Endothelial cell of umbilical vein (primary cell): ENCODE measurements at regions of chr21 and their contacts with region 1.

Region 1: GRCh38 chr21:31580866-31581276 is 78.6 kb upstream of the SOD1 start:
- DNase-seq: peak; percentile 60
- H3K4me3 ChIP-seq: no peak overlapping the region
- H3K27ac ChIP-seq: no peak overlapping the region
- H3K4me1 ChIP-seq: peaks cover 11% of the 10 kb centered on the region
- H3K27me3 ChIP-seq: no peaks in the 10 kb centered on the region
- CTCF ChIP-seq: peak; percentile 66 to 78
- POLR2A ChIP-seq: no peak

Region 2: GRCh38 chr21:31198575-31198974 is 382.3 kb before region 1 on chr21:
- CTCF ChIA-PET with region 1: interaction called, 93 read pairs
- POLR2A ChIA-PET with region 1: no interaction called
- dilution Hi-C with region 1: no loop called
- intact Hi-C with region 1: loop called (anchors 1 kb)
- DNase-seq: peak; percentile 49
- H3K4me3 ChIP-seq: no peak overlapping the region
- H3K27ac ChIP-seq: no peak overlapping the region
- H3K4me1 ChIP-seq: no peaks in the 10 kb centered on the region
- H3K27me3 ChIP-seq: no peaks in the 10 kb centered on the region
- CTCF ChIP-seq: peak in 1 of 2 donors; percentile 18
- POLR2A ChIP-seq: no peak

Region 3: GRCh38 chr21:31347435-31348032 is 233.3 kb before region 1 on chr21:
- CTCF ChIA-PET with region 1: interaction called, 14 read pairs
- POLR2A ChIA-PET with region 1: no interaction called
- dilution Hi-C with region 1: no loop called
- intact Hi-C with region 1: loop called (anchors 1 kb)
- DNase-seq: no peak
- H3K4me3 ChIP-seq: no peak overlapping the region
- H3K27ac ChIP-seq: no peak overlapping the region
- H3K4me1 ChIP-seq: no peaks in the 10 kb centered on the region
- H3K27me3 ChIP-seq: peaks cover 4 to 24% of the 10 kb centered on the region in 2 experiments
- CTCF ChIP-seq: peak in 1 of 2 donors; percentile 17
- POLR2A ChIP-seq: no peak

Region 4: GRCh38 chr21:31558962-31559367 is 21.9 kb before region 1 on chr21:
- CTCF ChIA-PET with region 1: interaction called, 28 read pairs
- POLR2A ChIA-PET with region 1: no interaction called
- dilution Hi-C with region 1: no loop called
- intact Hi-C with region 1: no loop called
- DNase-seq: peak; percentile 79
- H3K4me3 ChIP-seq: peak overlapping the region in 2 of 3 experiments; percentile 32 to 50
- H3K27ac ChIP-seq: no peak overlapping the region
- H3K4me1 ChIP-seq: peaks cover 10% of the 10 kb centered on the region
- H3K27me3 ChIP-seq: peaks cover 20 to 23% of the 10 kb centered on the region in 2 experiments
- CTCF ChIP-seq: peak in 1 of 2 donors; percentile 21
- POLR2A ChIP-seq: no peak

Region 5: GRCh38 chr21:31665397-31665796 is 84.5 kb after region 1 on chr21:
- CTCF ChIA-PET with region 1: no interaction called
- POLR2A ChIA-PET with region 1: no interaction called
- dilution Hi-C with region 1: no loop called
- intact Hi-C with region 1: no loop called
- DNase-seq: no peak
- H3K4me3 ChIP-seq: no peak overlapping the region
- H3K27ac ChIP-seq: no peak overlapping the region
- H3K4me1 ChIP-seq: peaks cover 20% of the 10 kb centered on the region
- H3K27me3 ChIP-seq: no peaks in the 10 kb centered on the region
- CTCF ChIP-seq: no peak
- POLR2A ChIP-seq: no peak